ENCODE measurements at regions of chr2 and their contacts with region 1.

Region 1: GRCh38 chr2:70104231-70105111 is 17.2 kb downstream of the PCBP1 start:
- DNase-seq: peak; percentile 79
- ATAC-seq: no peak
- H3K4me3 Mint-ChIP-seq: peak overlapping the region; percentile 77
- H3K27ac Mint-ChIP-seq: peak overlapping the region; percentile 95
- H3K4me1 Mint-ChIP-seq: peaks cover 58% of the 10 kb centered on the region
- H3K27me3 Mint-ChIP-seq: no peaks in the 10 kb centered on the region
- CTCF ChIP-seq: no peak

Region 2: DNA sequence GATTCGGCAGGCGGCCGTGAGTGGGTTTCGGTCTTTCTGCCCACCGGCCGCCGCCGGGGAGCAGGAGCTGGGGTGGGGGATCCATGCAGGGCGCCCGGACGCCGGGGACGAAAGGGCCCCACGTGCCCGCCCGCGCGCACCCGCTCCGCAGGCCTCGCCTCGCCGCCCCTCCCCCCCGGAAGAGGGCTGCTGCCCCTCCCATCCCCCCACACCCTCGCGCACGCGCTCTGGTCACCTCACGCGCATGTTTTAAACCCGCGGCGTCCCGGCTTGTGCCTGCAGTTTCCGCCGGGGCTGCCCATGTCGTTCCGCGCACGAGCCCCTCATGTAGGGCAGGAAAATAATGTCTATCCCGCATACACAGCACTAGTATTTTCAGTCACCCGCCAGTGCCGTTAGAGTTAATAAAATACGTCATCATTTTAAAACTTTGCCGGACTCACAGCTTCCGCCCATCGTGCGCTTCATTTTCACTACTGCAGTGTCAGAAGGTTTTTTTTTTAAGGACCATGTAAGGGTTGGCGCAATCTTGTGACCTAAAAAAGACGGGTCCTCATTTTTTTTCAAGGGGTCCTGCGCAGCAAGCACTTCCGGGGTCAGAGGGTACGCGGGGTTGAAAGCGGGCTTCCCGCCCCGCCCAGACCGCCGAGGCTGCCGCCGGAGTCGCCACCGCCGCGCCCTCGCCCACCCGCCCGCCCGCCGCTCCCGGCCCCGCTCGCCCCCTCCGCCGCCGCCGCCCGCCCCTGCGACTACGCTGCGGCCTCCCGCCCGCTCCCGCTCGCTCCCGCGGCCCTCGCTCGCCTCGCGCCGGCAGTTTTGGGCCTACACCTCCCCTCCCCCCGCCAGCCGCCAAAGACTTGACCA is 17.4 kb before region 1 on chr2 and contains the start of gene PCBP1:
- CTCF ChIA-PET with region 1: interaction called, 13 read pairs
- POLR2A ChIA-PET with region 1: interaction called, 217 read pairs
- intact Hi-C with region 1: no loop called
- DNase-seq: peak; percentile 96
- ATAC-seq: peak; percentile 60
- H3K4me3 Mint-ChIP-seq: peak within 1 kb of the TSS; percentile 99
- H3K27ac Mint-ChIP-seq: peak within 1 kb of the TSS; percentile 98
- H3K4me1 Mint-ChIP-seq: peaks cover 53% of the 10 kb centered on the region
- H3K27me3 Mint-ChIP-seq: no peaks in the 10 kb centered on the region
- CTCF ChIP-seq: no peak
- total RNA-seq, gene PCBP1: 470 to 489 TPM

Region 3: DNA sequence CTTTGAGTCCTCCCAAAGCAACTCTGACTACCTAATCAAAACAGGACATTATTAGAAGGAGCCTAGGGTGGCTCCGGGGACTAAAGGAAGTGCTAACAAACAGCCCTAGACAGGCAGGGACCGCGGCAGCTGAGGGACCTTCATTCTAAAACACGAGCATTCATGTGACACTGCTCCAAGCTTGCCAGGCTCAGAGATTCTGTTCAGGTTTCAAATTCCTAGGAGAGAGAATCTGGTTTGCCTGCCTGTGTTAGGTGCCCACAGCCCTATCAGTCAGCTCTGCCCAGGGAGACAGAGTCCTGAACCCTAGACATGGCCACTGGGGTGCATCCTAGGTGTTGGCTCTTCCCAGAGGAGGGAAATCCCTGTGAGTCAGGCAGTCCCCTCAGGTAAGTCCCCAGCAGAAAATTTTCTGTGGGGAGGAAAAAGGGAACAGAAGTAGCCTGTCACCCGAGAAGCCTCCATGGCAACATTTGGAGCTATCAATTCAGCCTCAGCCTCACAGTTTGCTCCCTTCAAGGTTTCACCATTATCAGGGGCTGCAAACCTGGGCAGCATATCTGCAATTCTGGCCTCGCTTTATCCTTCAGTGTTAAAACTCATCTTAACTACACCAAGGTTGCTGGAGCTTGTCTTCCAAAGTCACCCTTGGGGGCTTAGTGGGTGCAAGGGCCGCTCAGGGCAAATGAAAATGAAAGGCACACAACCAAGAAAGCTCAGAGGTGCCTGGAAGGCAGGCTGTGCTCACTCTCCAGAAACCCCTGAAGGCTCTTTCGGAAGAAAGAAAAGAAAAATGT is 11.4 kb after region 1 on chr2:
- CTCF ChIA-PET with region 1: interaction called, 8 read pairs
- POLR2A ChIA-PET with region 1: interaction called, 84 read pairs
- intact Hi-C with region 1: no loop called
- DNase-seq: peak; percentile 46
- ATAC-seq: peak; percentile 57
- H3K4me3 Mint-ChIP-seq: peak overlapping the region; percentile 7
- H3K27ac Mint-ChIP-seq: peak overlapping the region; percentile 61
- H3K4me1 Mint-ChIP-seq: peaks cover 54% of the 10 kb centered on the region
- H3K27me3 Mint-ChIP-seq: no peaks in the 10 kb centered on the region
- CTCF ChIP-seq: no peak

Region 4: GRCh38 chr2:70124983-70125480 is 20.6 kb after region 1 on chr2:
- CTCF ChIA-PET with region 1: interaction called, 10 read pairs
- POLR2A ChIA-PET with region 1: interaction called, 84 read pairs
- intact Hi-C with region 1: no loop called
- DNase-seq: peak; percentile 67
- ATAC-seq: peak; percentile 49
- H3K4me3 Mint-ChIP-seq: peak overlapping the region; percentile 92
- H3K27ac Mint-ChIP-seq: peak overlapping the region; percentile 100
- H3K4me1 Mint-ChIP-seq: peaks cover 62% of the 10 kb centered on the region
- H3K27me3 Mint-ChIP-seq: no peaks in the 10 kb centered on the region
- CTCF ChIP-seq: no peak

Measured in activated CD8-positive, alpha-beta T cell treated with anti-CD3 and anti-CD28 coated beads for 36 hours (primary cell).